ENCODE measurements at regions of chr5 and their contacts with region 1.

Region 1: DNA sequence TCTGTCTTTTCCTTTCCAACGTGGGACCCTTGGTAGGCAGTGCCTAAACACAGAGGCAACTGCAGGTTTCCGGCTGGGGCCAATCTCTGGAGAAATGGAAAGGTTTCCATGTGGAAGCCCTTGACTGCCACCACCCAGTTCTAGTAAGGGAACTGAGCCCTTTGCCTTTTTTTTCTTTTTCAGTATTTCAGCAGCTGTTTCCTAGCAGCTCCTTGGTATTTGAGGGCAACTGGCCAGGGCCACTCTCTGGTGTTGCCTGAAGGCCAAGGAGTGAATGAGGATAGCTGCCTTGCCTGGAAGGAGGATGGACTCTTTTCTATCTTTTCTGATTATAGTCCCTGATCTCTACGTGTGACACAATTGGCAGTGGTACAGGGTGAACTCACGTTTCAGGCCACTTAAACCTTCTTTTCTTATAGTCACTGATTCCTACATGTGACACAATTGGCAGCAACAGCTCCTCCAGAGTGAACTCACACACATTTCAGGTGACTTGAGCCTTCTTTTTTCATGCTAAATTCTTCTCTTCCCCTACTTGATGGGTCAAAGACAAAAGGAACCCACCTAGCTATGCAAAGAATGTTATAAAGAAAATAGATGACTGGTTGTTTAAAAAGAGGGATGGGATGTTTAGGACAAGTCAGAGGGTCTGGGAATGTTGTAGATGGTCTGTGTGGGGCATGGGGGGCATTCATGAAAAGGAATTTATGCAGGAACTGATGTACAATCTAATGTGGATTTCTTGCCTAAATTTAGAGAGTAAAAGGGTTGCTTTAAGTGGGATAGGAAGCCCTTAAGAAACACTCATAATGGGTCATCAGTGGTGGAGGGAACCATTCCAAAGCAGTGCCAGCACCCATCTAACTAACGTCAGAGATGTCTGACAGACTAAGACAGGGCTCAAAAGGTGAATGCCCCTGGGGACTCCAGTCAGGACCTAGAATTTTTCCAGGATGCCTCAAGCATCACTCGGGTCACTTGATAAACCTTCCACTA is 190.1 kb downstream of the TMEM232 start:
- DNase-seq: no peak
- ATAC-seq: no peak
- H3K4me3 ChIP-seq: no peak overlapping the region
- H3K27ac ChIP-seq: no peak overlapping the region
- H3K4me1 ChIP-seq: no peaks in the 10 kb centered on the region
- H3K27me3 ChIP-seq: no peaks in the 10 kb centered on the region
- CTCF ChIP-seq: no peak
- EP300 ChIP-seq: no peak
- POLR2A ChIP-seq: no peak
- RAD21 ChIP-seq: no peak

Region 2: GRCh38 chr5:109695005-109695926 is 841.2 kb before region 1 on chr5:
- CTCF ChIA-PET with region 1: no interaction called
- POLR2A ChIA-PET with region 1: no interaction called
- in situ Hi-C with region 1: no loop called
- intact Hi-C with region 1: no loop called
- DNase-seq: no peak
- ATAC-seq: no peak
- H3K4me3 ChIP-seq: no peak overlapping the region
- H3K27ac ChIP-seq: no peak overlapping the region
- H3K4me1 ChIP-seq: peaks cover 51% of the 10 kb centered on the region
- H3K27me3 ChIP-seq: no peaks in the 10 kb centered on the region; a peak in 1 of 5 replicates
- CTCF ChIP-seq: no peak
- EP300 ChIP-seq: no peak
- POLR2A ChIP-seq: no peak
- RAD21 ChIP-seq: no peak

Region 3: DNA sequence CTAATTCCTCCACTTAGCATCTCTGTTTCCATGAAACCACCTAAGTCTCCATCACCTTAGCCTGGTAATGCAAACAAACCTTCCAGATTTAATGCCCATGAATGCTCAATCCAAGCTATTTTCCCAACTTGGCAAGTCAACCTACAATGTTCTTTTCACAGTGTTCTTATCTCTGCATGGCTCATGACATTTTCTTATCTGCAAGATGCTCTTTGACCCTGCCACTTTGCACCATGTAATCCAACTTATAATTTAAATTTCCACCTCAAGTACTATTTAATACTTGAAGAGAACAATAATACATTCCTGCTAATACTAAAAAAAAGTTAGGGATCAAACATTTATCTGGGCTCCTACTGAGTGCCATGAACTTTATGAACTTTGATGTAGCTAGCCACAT is 25.8 kb after region 1 on chr5:
- CTCF ChIA-PET with region 1: no interaction called
- POLR2A ChIA-PET with region 1: no interaction called
- in situ Hi-C with region 1: no loop called
- intact Hi-C with region 1: loop called (anchors 2 kb)
- DNase-seq: no peak
- ATAC-seq: no peak
- H3K4me3 ChIP-seq: no peak overlapping the region
- H3K27ac ChIP-seq: no peak overlapping the region
- H3K4me1 ChIP-seq: no peaks in the 10 kb centered on the region
- H3K27me3 ChIP-seq: no peaks in the 10 kb centered on the region
- CTCF ChIP-seq: no peak
- EP300 ChIP-seq: no peak
- POLR2A ChIP-seq: no peak
- RAD21 ChIP-seq: no peak

Region 4: DNA sequence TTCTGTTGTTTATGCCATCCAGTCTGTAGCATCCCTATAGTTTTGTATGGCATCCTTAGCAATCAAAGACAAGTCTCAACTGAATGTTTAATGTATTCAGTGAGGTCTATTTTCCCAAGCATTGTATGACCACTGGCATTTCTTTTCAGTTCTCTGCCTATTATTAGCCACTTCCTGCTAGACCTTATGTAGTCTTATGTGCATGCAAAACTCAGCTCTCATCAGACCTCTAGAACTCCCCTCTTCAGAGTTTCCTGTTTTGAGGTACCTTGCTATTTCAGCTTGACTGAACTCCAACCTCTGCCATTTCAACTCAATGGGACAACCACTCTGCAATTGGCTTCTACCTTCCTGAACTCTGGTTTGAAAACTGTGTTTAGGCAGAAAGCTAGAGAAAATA is 315.6 kb after region 1 on chr5:
- CTCF ChIA-PET with region 1: no interaction called
- POLR2A ChIA-PET with region 1: no interaction called
- in situ Hi-C with region 1: no loop called
- intact Hi-C with region 1: no loop called
- DNase-seq: no peak
- ATAC-seq: no peak
- H3K4me3 ChIP-seq: no peak overlapping the region
- H3K27ac ChIP-seq: no peak overlapping the region
- H3K4me1 ChIP-seq: no peaks in the 10 kb centered on the region
- H3K27me3 ChIP-seq: no peaks in the 10 kb centered on the region
- CTCF ChIP-seq: no peak
- EP300 ChIP-seq: no peak
- POLR2A ChIP-seq: no peak
- RAD21 ChIP-seq: no peak

Region 5: GRCh38 chr5:111929867-111930266 is 1393.4 kb after region 1 on chr5:
- CTCF ChIA-PET with region 1: no interaction called
- POLR2A ChIA-PET with region 1: no interaction called
- in situ Hi-C with region 1: no loop called
- intact Hi-C with region 1: no loop called
- DNase-seq: no peak
- ATAC-seq: no peak
- H3K4me3 ChIP-seq: no peak overlapping the region
- H3K27ac ChIP-seq: no peak overlapping the region
- H3K4me1 ChIP-seq: no peaks in the 10 kb centered on the region
- H3K27me3 ChIP-seq: no peaks in the 10 kb centered on the region
- CTCF ChIP-seq: no peak
- EP300 ChIP-seq: no peak
- POLR2A ChIP-seq: no peak
- RAD21 ChIP-seq: no peak